Activated CD4-positive, alpha-beta T cell treated with anti-CD3 and anti-CD28 coated beads for 36 hours (primary cell): ENCODE measurements at regions of chr4 and their contacts with region 1.

Region 1: DNA sequence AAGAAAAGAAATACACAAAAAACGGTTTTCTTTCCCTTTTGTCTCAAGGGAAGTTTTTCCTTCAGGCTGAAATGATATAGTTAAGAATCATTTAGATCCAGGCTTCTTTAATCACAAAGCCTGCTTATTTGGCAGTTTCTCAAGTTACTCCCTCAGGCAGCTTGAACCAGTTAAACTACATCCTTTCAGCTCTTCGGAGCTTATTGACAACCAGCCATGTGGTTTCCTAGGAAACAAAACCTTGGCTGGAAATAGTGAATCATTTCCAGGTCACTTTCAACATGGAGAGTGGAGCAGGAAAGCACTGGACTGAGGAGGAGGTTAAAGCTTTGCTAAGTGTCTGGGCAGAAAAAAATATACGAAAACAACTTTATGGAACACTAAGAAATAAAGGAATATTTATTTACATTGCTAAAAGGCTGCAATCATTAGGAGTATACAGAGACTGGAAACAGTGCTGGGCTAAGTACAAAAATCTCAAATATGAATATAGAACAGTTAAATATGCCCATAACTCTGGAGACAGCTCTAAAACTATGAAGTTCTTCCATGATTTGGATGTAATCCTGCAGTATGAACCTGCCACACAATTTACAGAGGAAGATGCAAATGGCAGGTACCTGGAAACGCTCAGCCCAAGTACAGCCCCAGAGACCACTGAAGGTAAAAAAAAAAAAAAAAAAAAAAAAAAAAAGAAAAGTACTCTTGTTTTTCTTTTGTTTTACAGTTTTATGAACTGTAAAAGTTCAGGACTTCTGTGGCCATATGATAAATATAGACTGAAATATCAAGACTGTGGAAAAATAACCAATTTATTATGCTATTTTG is 23.2 kb upstream of the AASDH start:
- DNase-seq: no peak
- ATAC-seq: peak; percentile 84
- H3K4me3 Mint-ChIP-seq: no peak overlapping the region
- H3K27ac Mint-ChIP-seq: peak overlapping the region; percentile 51
- H3K4me1 Mint-ChIP-seq: peaks cover 23% of the 10 kb centered on the region
- H3K27me3 Mint-ChIP-seq: no peaks in the 10 kb centered on the region

Region 2: DNA sequence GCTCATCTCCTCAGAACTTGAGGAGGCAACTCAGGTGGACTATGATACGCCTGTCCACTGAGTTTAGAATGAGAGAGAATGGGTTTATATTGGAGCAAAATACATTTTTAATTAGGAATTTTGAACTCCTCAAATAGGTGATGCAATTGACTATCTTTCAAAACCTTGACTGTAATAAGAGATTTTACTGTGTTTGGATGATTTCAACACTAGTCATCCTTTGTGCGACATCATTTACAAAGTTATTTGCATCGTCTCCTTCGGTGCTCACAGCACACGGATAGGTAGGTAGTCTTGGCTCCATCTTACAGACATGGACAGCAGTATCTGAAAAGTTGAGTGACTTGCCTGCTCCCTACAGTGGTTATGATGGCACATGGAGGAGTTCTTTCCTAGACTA is 90.2 kb before region 1 on chr4:
- CTCF ChIA-PET with region 1: no interaction called
- POLR2A ChIA-PET with region 1: no interaction called
- intact Hi-C with region 1: no loop called
- DNase-seq: no peak
- ATAC-seq: no peak
- H3K4me3 Mint-ChIP-seq: no peak overlapping the region
- H3K27ac Mint-ChIP-seq: no peak overlapping the region
- H3K4me1 Mint-ChIP-seq: peaks cover 2% of the 10 kb centered on the region
- H3K27me3 Mint-ChIP-seq: peaks cover 2% of the 10 kb centered on the region

Region 3: DNA sequence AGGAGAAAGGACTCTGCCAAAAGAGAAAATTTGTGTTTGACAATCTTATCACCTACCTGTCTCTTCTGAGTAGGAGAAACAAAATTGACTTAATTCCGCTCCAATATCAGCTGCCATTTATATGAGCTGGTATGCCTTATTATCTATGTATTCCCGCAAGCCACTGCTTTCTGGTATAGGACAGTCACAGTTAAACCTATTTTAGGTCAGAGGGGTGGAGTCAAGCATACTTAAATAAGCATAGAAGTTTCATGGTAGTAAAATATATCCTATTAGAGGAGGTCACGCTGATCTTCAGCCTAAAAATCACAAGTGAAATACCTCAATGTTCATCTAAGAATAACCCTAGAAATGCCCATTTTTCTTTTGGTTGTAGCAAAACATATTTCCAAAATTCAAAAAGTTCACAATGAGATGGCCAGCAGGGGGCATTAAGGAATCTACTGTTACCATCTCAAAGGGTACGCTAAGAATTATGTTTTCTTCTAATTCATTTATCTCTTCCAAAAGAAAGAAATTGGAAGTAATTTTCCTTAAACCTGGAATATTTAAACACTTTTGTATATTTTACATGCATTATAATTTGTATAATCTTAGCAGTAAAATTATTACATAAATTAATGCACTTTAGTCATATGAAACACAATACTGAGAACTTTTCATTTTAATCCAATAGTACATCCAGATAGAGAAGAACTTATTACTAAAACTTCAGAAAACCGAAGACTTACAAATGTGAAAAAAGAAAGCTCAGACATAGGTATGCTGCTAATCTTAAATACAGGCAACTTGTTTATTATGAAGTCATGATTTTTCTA is 14.5 kb after region 1 on chr4:
- CTCF ChIA-PET with region 1: interaction called, 11 read pairs
- POLR2A ChIA-PET with region 1: no interaction called
- intact Hi-C with region 1: no loop called
- DNase-seq: peak; percentile 39
- ATAC-seq: no peak
- H3K4me3 Mint-ChIP-seq: no peak overlapping the region
- H3K27ac Mint-ChIP-seq: no peak overlapping the region
- H3K4me1 Mint-ChIP-seq: peaks cover 24% of the 10 kb centered on the region
- H3K27me3 Mint-ChIP-seq: no peaks in the 10 kb centered on the region